Activated naive CD8-positive, alpha-beta T cell treated with anti-CD3 and anti-CD28 coated beads, Interleukin-2, amount 10 ng/mL, durations not matched to agents 7 days and 5 days (primary cell): ENCODE measurements at regions of chr6 and their contacts with region 1.

Region 1: GRCh38 chr6:35297601-35298481 is at the start of gene DEF6:
- DNase-seq: peak; percentile 88
- ATAC-seq: peak; percentile 80
- H3K4me3 Mint-ChIP-seq: peak within 1 kb of the TSS; percentile 89
- H3K27ac Mint-ChIP-seq: peak within 1 kb of the TSS; percentile 94
- H3K4me1 Mint-ChIP-seq: peaks cover 45% of the 10 kb centered on the region
- H3K27me3 Mint-ChIP-seq: no peaks in the 10 kb centered on the region
- total RNA-seq, gene DEF6: 213 to 216 TPM

Region 2: DNA sequence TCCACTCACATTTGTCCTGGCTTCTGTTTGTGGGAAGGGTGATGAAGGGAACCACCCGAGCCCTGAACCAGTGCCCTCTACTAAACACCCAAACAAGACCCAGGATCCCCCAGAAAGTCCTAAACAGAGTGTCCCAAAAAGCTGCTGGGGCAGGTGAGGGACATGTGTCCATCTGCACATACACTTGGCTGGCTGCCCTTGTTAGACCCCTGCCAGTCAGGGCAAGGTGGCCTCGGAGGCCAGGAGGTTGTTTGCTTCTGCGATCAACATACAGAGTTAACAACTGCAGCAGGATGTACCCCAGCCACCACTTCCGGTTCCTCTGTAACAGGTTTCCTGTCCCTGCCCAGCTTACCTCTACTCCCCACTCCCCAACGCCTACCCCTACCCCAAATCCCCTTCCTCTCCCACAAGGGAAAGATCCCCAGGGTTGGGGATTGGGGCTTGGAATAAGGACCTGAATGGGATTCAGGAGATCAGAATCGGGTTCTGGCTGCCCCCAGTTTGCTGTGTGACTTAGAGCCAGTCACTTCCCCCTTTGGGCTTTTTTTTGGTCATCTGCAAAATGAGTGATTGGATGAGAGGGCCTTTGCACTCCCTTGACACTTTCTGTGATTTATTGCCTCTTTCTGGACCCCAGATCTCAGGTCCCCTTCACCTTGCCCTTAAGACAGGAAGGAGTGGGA is 13.7 kb after region 1 on chr6:
- POLR2A ChIA-PET with region 1: interaction called, 86 read pairs
- DNase-seq: peak; percentile 70
- ATAC-seq: peak; percentile 85
- H3K4me3 Mint-ChIP-seq: peak overlapping the region; percentile 79
- H3K27ac Mint-ChIP-seq: peak overlapping the region; percentile 97
- H3K4me1 Mint-ChIP-seq: peaks cover 65% of the 10 kb centered on the region
- H3K27me3 Mint-ChIP-seq: no peaks in the 10 kb centered on the region

Region 3: GRCh38 chr6:35318196-35319171 is 20.6 kb after region 1 on chr6:
- POLR2A ChIA-PET with region 1: interaction called, 14 read pairs
- DNase-seq: no peak
- ATAC-seq: no peak
- H3K4me3 Mint-ChIP-seq: no peak overlapping the region
- H3K27ac Mint-ChIP-seq: no peak overlapping the region
- H3K4me1 Mint-ChIP-seq: peaks cover 22% of the 10 kb centered on the region
- H3K27me3 Mint-ChIP-seq: no peaks in the 10 kb centered on the region

Region 4: DNA sequence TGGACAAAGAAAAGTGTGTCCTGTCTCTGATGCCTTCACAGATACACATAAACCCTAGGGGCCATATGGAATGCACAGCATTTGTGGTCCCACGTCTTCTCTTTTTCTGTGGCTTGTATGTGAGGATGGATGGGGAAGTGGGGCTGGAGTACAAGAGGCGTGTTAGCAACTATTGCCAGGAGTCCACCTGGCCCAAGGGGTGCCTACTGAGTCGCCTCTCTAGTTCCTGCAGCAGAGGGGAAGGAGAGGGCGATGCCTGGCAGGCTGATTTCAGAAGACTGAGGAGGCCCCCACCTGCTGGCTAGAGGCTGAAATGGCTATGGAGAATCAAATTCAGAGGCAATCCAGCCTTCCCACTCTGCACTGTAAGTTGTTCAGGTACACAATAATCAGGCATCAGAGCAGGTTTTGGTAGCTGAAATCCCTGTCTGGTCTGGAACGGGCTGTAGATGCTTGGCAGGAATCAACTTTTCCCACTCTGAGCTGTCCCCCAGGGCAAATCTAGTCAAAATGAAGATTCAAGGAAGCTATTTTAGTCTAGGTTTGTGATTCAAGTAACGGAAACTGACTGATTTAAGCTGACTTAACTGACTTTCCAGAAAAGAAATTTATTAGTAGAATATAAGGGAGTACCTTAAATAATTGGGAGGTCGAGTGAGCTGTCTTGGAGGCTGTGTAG is 29.6 kb after region 1 on chr6:
- POLR2A ChIA-PET with region 1: interaction called, 45 read pairs
- DNase-seq: peak; percentile 71
- ATAC-seq: peak; percentile 95
- H3K4me3 Mint-ChIP-seq: no peak overlapping the region
- H3K27ac Mint-ChIP-seq: peak overlapping the region; percentile 81
- H3K4me1 Mint-ChIP-seq: peaks cover 15% of the 10 kb centered on the region
- H3K27me3 Mint-ChIP-seq: no peaks in the 10 kb centered on the region

Region 5: GRCh38 chr6:35402136-35402855 is 104.5 kb after region 1 on chr6:
- POLR2A ChIA-PET with region 1: no interaction called
- DNase-seq: no peak
- ATAC-seq: no peak
- H3K4me3 Mint-ChIP-seq: no peak overlapping the region
- H3K27ac Mint-ChIP-seq: peak overlapping the region; percentile 42
- H3K4me1 Mint-ChIP-seq: peaks cover 18% of the 10 kb centered on the region
- H3K27me3 Mint-ChIP-seq: no peaks in the 10 kb centered on the region

Region 6: DNA sequence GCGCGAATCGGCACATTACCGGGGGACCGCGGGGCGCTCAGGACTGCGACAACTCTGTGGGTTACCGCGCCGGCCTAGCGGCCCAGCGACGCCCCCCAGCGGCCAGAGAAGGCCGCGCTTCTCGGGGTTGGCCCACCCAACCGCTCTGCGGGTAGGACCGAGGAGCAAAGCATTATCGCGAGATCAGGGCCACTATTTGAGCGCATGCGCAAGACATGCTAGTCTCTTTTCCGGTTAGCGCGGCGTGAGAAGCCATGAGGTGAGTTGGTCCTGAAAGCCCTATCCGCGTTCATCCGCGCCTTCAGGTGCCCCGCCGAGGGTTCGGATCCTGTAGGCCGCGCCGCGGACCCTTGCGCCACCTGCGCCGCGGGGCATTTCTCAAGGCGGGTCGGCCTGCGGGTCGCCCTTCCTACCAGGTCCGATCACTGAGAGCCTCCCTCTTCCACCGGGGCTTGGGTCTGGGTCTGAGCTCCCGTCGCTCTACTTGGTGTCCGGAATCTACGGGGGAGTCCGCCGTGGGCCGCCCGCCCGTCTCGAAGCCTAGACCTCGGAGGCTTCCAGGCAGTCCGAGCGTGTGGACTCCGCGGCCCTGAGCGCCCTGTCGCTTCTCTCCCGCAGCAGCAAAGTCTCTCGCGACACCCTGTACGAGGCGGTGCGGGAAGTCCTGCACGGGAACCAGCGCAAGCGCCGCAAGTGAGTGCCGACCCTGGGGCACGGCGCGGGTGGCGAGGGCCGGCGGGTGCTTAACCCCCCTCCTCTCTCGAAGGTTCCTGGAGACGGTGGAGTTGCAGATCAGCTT is 170.5 kb after region 1 on chr6 and contains the start of gene RPL10A:
- POLR2A ChIA-PET with region 1: interaction called, 13 read pairs
- DNase-seq: peak; percentile 95
- ATAC-seq: peak; percentile 90
- H3K4me3 Mint-ChIP-seq: peak within 1 kb of the TSS; percentile 97
- H3K27ac Mint-ChIP-seq: peak within 1 kb of the TSS; percentile 99
- H3K4me1 Mint-ChIP-seq: peaks cover 36% of the 10 kb centered on the region
- H3K27me3 Mint-ChIP-seq: no peaks in the 10 kb centered on the region
- total RNA-seq, gene RPL10A: 1,373 to 1,398 TPM